ENCODE measurements at regions of chr12 and their contacts with region 1.

Region 1: DNA sequence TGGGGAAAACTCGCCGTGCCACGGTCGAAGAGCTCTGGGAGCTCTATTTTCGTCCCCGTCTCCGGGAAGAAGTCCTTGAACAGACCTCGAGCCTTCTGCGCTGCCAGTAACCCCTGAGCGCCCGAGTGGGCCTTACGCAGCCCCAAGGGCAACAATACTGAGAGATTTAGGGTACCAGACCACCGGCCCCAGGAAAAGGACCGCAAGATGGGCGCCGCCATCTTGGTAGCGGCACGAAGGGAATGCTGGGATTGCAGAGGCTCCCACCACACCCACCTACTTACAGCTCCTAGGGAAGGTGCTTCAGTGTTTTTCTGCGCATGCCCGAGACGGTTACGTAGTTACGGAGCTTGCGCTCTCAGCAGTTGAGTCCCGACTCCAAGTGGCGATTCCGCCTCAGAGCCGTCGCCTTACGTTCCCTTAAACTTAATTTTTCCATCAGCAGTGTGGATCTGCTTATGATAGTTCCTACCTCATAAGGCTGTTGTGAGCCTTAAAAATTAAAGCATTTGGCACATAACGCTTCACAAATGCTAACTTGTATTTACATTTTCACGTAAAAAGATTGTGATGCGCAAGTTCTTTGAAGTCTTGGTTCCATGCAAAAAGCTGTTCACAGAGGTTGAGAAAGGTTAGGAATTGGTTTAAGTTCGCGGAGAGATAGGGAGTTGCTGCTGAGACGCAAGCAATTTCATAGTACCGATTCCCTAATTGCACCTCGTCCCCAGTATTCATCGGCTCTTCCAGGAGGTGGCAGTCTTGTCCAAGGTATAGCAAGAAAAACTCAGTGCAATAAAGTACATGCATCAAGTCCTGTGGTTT is at the start of gene YARS2:
- DNase-seq: peak; percentile 96
- ATAC-seq: peak; percentile 96
- H3K4me3 ChIP-seq: peak within 1 kb of the TSS; percentile 86 to 95 (median 91)
- H3K27ac ChIP-seq: peak within 1 kb of the TSS; percentile 76
- H3K4me1 ChIP-seq: peaks cover 30% of the 10 kb centered on the region
- H3K27me3 ChIP-seq: peaks cover 0 to under 1% of the 10 kb centered on the region in 2 experiments; a peak in 1 of 5 replicates
- CTCF ChIP-seq: peak; percentile 93
- EP300 ChIP-seq: no peak
- POLR2A ChIP-seq: peak; percentile 91 to 98
- RAD21 ChIP-seq: peak; percentile 85
- total RNA-seq, gene YARS2: 36.0 and 39.6 TPM in 2 replicates

Region 2: DNA sequence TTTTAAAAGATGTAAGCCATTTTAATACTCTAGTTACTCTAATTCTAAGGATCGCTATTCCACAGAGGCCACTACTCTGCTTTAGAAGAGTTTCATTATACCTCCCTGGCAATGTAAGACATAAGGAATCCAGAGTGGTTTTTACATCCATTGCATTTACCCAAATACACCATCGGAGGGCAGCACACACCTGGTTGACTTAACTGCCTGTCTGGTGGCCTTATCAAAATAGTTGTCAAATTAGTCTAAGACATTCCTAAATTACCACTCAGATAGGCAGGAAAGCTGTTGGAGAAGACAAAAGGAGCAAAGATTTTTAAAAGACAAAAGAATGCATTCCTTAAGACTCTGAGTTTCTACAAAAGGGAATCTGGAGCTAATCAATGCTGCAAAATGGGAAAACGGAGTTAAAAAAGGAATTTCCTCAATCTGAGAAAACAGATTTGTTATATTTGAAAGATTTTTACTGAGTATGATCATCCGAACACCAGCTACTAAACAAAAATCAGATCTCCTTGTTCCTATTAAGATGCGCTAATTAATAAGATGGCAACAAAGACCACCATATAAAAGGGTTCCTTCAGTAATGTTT is 390.3 kb before region 1 on chr12:
- CTCF ChIA-PET with region 1: interaction called, 4 read pairs
- POLR2A ChIA-PET with region 1: no interaction called
- in situ Hi-C with region 1: no loop called
- intact Hi-C with region 1: loop called (anchors 5 kb)
- DNase-seq: peak; percentile 64
- ATAC-seq: peak; percentile 70
- H3K4me3 ChIP-seq: no peak overlapping the region
- H3K27ac ChIP-seq: no peak overlapping the region
- H3K4me1 ChIP-seq: peaks cover 15% of the 10 kb centered on the region
- H3K27me3 ChIP-seq: no peaks in the 10 kb centered on the region
- CTCF ChIP-seq: peak; percentile 86
- EP300 ChIP-seq: no peak
- POLR2A ChIP-seq: no peak
- RAD21 ChIP-seq: peak; percentile 83

Region 3: DNA sequence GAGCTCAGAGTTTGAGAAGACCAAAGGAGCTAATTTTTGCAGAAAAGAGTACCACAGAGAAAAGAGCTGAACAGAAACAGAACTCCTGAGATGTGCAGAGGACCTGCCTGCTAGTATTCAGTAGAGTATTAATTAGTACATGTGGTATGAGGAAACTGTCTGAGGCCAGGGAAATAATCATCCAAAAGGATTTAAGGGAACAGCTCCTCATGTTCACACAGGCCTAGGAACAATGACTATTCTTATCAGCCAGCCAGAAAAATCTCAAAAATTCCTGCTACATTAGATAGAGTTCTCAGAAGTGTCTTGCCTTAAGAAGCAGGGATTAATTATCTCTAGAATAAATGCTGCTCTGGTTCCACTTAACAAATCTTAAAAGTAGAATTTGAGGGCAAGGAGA is 104.3 kb after region 1 on chr12:
- CTCF ChIA-PET with region 1: no interaction called
- POLR2A ChIA-PET with region 1: no interaction called
- in situ Hi-C with region 1: no loop called
- intact Hi-C with region 1: loop called (anchors 10 kb)
- DNase-seq: no peak
- ATAC-seq: no peak
- H3K4me3 ChIP-seq: no peak overlapping the region
- H3K27ac ChIP-seq: no peak overlapping the region
- H3K4me1 ChIP-seq: no peaks in the 10 kb centered on the region
- H3K27me3 ChIP-seq: no peaks in the 10 kb centered on the region
- CTCF ChIP-seq: no peak
- EP300 ChIP-seq: no peak
- POLR2A ChIP-seq: no peak
- RAD21 ChIP-seq: no peak

Region 4: GRCh38 chr12:32918890-32919801 is 163.3 kb after region 1 on chr12:
- CTCF ChIA-PET with region 1: interaction called, 25 read pairs
- POLR2A ChIA-PET with region 1: interaction called, 4 read pairs
- in situ Hi-C with region 1: no loop called
- intact Hi-C with region 1: loop called (anchors 1 kb)
- DNase-seq: peak; percentile 37
- ATAC-seq: peak; percentile 69
- H3K4me3 ChIP-seq: no peak overlapping the region
- H3K27ac ChIP-seq: no peak overlapping the region
- H3K4me1 ChIP-seq: peaks cover 8% of the 10 kb centered on the region; the same call in 1 of the 2 replicates
- H3K27me3 ChIP-seq: no peaks in the 10 kb centered on the region
- CTCF ChIP-seq: peak; percentile 68
- EP300 ChIP-seq: no peak
- POLR2A ChIP-seq: no peak
- RAD21 ChIP-seq: peak; percentile 56; the same call in 1 of the 2 replicates

Region 5: DNA sequence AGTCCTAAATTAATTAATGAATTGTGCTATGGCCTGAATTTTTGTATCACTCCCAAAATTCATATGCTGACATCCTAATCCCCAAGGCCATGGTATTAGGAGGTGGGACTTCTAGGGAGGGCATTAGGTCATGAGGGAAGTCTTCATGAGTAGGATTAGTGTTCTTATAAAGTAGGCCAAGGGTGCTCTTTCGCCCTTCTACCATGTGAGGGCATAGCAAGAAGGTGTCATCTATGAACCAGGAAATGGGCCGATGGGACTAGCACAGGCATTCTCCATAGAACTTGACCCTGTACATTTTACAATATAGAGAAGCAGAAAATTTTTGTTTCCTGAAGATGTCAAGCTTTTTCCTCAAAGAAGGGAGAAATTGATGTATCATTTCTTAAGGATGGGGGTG is 671.2 kb after region 1 on chr12:
- CTCF ChIA-PET with region 1: no interaction called
- POLR2A ChIA-PET with region 1: no interaction called
- in situ Hi-C with region 1: loop called (anchors 25 kb)
- intact Hi-C with region 1: no loop called
- DNase-seq: peak; percentile 18
- ATAC-seq: peak; percentile 67
- H3K4me3 ChIP-seq: no peak overlapping the region
- H3K27ac ChIP-seq: no peak overlapping the region
- H3K4me1 ChIP-seq: no peaks in the 10 kb centered on the region
- H3K27me3 ChIP-seq: no peaks in the 10 kb centered on the region
- CTCF ChIP-seq: peak; percentile 23; the same call in 1 of the 2 replicates
- EP300 ChIP-seq: no peak
- POLR2A ChIP-seq: no peak
- RAD21 ChIP-seq: no peak

Measured in HepG2 (cell line).